HEK293 (cell line): ENCODE measurements at regions of chr17 and their contacts with region 1.

Region 1: GRCh38 chr17:4583782-4584100 is 588 bp upstream of the SMTNL2 start:
- H3K4me3 ChIP-seq: peak overlapping the region; percentile 39
- H3K27ac ChIP-seq: peak overlapping the region; percentile 20; the same call in 1 of the 2 replicates
- H3K4me1 ChIP-seq: peaks cover 2% of the 10 kb centered on the region; the same call in 1 of the 2 replicates
- CTCF ChIP-seq: peak; percentile 70; the same call in 1 of the 2 replicates

Region 2: DNA sequence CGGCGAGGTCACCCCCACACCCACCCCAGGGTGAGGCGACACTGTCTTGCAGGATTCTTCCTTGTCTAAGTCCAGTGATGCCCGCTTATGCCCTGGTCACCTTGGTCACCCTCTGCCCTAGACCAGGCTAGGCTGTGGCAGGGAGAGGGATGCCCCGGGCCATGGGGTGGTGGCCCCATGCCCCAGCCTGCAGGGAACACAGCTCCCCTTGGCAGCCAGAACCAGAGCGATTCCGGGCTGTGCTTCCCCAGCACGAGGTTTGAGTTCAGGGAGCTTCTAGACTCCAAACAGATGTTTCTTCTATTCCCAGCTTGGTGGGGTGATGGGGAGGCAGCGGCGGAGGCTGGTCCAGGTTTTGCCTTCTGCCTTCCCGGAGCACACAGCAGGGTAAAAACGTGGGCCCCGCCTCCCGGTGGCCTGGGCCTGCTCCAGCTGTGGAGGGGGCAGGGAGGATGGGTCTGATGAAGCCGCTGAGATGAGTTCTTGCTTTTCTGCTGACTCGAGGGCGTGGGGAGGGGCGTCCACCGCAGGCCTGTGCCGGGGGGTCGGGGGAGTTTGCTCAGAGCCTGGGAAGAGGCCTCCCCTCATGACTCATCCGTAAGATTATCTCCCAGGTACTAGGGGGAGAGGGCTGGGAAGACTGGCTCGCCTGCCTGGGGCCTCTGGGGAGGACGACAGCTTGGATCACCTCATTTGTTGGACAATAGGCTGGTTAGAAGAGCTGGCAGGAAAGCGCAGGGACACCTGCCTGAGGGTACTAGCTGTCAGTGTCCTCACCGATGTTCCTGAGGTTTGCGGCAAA is 16.0 kb after region 1 on chr17:
- CTCF ChIA-PET with region 1: interaction called, 6 read pairs
- POLR2A ChIA-PET with region 1: interaction called, 12 read pairs
- H3K4me3 ChIP-seq: no peak overlapping the region
- H3K27ac ChIP-seq: peak overlapping the region; percentile 57
- H3K4me1 ChIP-seq: peaks cover 25% of the 10 kb centered on the region
- CTCF ChIP-seq: no peak